Breast epithelium (tissue), 4 donors: ENCODE measurements at regions of chr13 and their contacts with region 1.

Region 1: DNA sequence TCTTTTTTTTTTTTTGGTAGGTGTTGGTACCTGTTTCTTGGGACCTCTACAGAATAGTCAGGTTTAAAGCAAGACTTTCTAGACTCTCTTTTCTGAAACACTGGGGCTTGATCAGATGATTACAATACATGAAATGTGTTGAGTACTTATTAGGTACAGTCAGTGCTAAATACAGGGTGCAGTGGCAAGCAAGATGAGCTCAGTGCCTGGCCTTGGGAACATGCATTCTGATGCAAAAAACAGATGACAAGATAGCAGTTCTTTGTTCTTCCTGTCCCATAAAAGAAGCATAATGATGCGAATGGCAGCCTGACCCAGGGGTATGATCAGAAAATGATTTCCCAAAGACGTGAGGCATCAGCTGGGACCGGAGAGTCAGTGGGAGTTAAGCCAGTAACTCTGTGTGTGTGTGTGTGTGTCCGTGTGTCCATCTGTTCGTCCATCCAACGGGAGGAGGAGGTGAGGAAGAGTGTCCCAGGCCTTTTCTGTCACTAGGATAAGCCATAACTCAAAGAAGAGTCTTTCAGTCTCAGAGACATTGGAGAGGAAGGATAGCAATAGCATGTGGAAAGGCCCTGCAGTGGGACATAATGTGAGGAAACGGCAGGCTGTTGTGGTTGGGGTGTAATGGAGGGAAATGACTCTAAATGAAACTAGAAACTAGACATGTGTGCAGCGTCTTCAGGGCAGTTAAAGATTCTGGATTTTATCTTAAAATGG is 32.2 kb downstream of the SLAIN1 start:
- DNase-seq: no peak
- H3K4me3 ChIP-seq: no peak overlapping the region
- H3K27ac ChIP-seq: no peak overlapping the region
- H3K4me1 ChIP-seq: no peaks in the 10 kb centered on the region
- H3K27me3 ChIP-seq: no peaks in the 10 kb centered on the region
- CTCF ChIP-seq: no peak
- POLR2A ChIP-seq: no peak

Region 2: DNA sequence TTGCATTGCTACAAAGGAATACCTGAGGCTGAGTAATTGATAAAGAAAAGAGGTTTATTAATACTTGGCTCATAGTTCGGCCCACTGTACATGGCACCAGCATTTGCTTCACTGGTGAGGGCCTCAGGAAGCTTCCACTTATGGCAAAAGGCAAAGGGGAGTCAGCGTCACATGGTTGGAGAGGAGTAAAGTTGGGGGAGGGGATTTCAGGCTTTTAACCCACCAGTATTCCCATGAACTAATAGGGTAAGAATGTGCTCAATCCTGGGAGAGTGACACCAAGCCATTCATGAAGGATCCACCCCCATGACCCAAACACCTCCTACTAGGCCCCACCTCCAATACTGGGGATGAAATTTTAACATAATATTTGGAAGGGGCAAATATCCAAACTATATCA is 320.2 kb before region 1 on chr13:
- intact Hi-C with region 1: no loop called
- DNase-seq: no peak
- H3K4me3 ChIP-seq: no peak overlapping the region
- H3K27ac ChIP-seq: no peak overlapping the region
- H3K4me1 ChIP-seq: no peaks in the 10 kb centered on the region
- H3K27me3 ChIP-seq: no peaks in the 10 kb centered on the region
- CTCF ChIP-seq: no peak
- POLR2A ChIP-seq: no peak

Region 3: GRCh38 chr13:78875792-78876580 is 1146.3 kb after region 1 on chr13:
- intact Hi-C with region 1: loop called (anchors 5 kb)
- DNase-seq: no peak
- H3K4me3 ChIP-seq: no peak overlapping the region
- H3K27ac ChIP-seq: no peak overlapping the region
- H3K4me1 ChIP-seq: no peaks in the 10 kb centered on the region
- H3K27me3 ChIP-seq: no peaks in the 10 kb centered on the region
- CTCF ChIP-seq: no peak
- POLR2A ChIP-seq: no peak